WTC11 (cell line): ENCODE measurements at regions of chr1 and their contacts with region 1.

Region 1: DNA sequence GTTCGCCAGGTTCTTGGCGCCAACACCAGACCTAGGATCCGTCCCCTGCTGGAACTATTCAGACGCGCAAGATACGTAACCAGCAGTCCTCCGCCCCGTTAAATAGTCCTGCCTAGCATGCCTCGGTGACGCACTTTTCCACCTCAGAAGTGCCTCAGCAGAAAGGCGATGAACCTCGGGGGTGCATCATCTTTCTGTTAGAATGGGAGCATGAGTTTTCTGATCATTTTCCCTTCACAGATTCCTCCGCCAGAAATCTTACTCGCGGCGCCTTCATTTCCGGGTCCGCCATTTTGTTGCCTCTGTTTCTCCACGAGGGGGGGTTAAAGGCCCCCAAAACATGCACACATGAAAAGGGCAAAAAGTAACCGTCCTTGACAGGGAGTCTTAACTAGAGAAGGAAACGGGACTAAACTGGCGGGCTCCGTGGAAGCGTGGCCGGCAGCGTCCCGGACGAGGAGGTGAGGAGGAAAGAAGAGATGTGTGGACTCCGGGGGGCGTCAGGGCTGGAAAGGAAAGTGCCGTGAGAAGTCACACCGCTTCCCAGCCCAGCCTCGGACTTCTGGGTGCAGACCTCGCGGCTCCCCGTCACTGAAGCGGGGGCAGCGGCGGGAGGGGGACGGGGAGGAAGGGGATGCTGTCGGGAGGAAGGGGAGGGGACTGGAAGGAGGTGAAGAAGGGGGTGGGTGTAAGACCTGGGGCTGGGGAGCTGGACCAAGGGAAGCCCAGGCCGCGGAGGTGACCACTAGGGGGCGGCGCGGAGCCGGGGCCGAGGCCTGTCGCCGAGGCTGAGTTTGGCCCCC is at the start of gene GABPB2:
- DNase-seq: peak; percentile 93
- ATAC-seq: peak; percentile 90
- H3K4me3 Mint-ChIP-seq: peak within 1 kb of the TSS; percentile 94
- H3K27ac Mint-ChIP-seq: peak within 1 kb of the TSS; percentile 100
- H3K4me1 Mint-ChIP-seq: peaks cover 10% of the 10 kb centered on the region
- H3K27me3 Mint-ChIP-seq: no peaks in the 10 kb centered on the region
- CTCF ChIP-seq: peak; percentile 97
- total RNA-seq, gene GABPB2: 1.4 to 3.3 TPM (median 1.7 TPM) in 3 replicates

Region 2: DNA sequence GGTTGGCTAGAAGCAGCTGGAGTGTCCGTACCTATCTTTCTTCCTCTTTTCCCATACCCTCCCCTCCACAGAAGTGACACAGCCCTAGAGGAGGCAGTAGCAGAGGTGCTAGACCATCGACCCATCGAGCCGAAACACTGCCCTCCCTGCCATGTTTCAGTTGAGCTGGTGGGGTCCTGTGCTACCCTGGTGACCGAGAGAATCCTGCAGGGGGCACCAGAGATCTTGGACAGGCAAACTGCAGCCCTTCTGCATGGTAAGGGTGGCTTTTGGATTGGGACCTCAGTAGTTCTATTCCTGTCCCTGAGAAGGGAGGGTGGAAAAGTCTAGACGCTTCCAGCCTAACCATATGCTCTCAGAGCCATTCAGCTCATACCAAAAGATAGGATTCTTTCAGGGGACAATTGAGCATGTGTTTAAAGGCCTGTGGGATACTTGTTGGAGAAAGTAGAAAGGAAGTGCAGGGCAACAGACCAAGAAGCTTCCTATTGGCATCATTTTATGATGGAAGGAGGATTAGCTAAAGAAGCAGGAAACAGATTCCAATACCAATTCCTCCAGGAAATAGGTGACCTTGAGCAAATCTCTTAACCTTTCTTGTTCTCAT is 46.0 kb before region 1 on chr1:
- CTCF ChIA-PET with region 1: interaction called, 16 read pairs
- POLR2A ChIA-PET with region 1: interaction called, 3 read pairs
- DNase-seq: peak; percentile 92
- ATAC-seq: peak; percentile 100
- H3K4me3 Mint-ChIP-seq: no peak overlapping the region
- H3K27ac Mint-ChIP-seq: peak overlapping the region; percentile 33; the same call in 1 of the 2 replicates
- H3K4me1 Mint-ChIP-seq: no peaks in the 10 kb centered on the region
- H3K27me3 Mint-ChIP-seq: no peaks in the 10 kb centered on the region
- CTCF ChIP-seq: peak; percentile 67

Region 3: GRCh38 chr1:151059078-151059907 is 11.4 kb before region 1 on chr1 and contains the start of gene CDC42SE1:
- CTCF ChIA-PET with region 1: interaction called, 39 read pairs
- POLR2A ChIA-PET with region 1: interaction called, 13 read pairs
- DNase-seq: peak; percentile 86
- ATAC-seq: peak; percentile 84
- H3K4me3 Mint-ChIP-seq: peak within 1 kb of the TSS; percentile 79
- H3K27ac Mint-ChIP-seq: peak within 1 kb of the TSS; percentile 86
- H3K4me1 Mint-ChIP-seq: peaks cover 45% of the 10 kb centered on the region
- H3K27me3 Mint-ChIP-seq: no peaks in the 10 kb centered on the region
- CTCF ChIP-seq: 0 out of 2 replicates have a peak, but pooled peaks have one; percentile 35
- total RNA-seq, gene CDC42SE1: 72.8 to 76.3 TPM (median 75.5 TPM) in 3 replicates

Region 4: GRCh38 chr1:151146412-151147140 is 75.9 kb after region 1 on chr1 and contains the start of gene SEMA6C:
- CTCF ChIA-PET with region 1: interaction called, 24 read pairs
- POLR2A ChIA-PET with region 1: no interaction called
- DNase-seq: peak; percentile 94
- ATAC-seq: peak; percentile 92
- H3K4me3 Mint-ChIP-seq: peak within 1 kb of the TSS; percentile 93
- H3K27ac Mint-ChIP-seq: no peak within 1 kb of the TSS
- H3K4me1 Mint-ChIP-seq: peaks cover 38% of the 10 kb centered on the region
- H3K27me3 Mint-ChIP-seq: peaks cover 44% of the 10 kb centered on the region
- CTCF ChIP-seq: no peak
- total RNA-seq, gene SEMA6C: 16.3 to 21.0 TPM (median 18.1 TPM) in 3 replicates

Region 5: DNA sequence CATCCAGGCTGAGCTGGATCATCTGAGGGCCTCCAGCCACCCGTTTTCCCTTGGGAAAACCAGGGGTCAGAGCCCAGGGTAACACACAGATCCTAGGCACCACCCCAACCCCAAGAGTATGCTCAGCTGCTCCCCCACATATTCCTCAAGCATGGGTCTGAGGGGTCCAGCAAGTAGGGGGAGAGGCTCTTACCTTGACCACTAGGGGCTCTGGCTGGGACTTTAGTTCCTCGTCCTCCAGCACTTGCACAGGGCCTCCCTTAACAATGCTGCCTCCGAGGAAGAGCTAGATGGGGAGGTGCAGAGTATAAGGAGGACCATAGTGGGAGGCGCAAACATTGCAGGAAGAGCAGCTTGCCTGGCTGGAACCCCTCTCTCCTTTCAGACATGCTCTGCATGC is 294.3 kb after region 1 on chr1:
- CTCF ChIA-PET with region 1: no interaction called
- POLR2A ChIA-PET with region 1: no interaction called
- DNase-seq: no peak
- ATAC-seq: peak; percentile 68
- H3K4me3 Mint-ChIP-seq: no peak overlapping the region
- H3K27ac Mint-ChIP-seq: no peak overlapping the region
- H3K4me1 Mint-ChIP-seq: no peaks in the 10 kb centered on the region
- H3K27me3 Mint-ChIP-seq: peaks cover 9% of the 10 kb centered on the region
- CTCF ChIP-seq: no peak